ENCODE measurements at regions of chr20 and their contacts with region 1.

Region 1: DNA sequence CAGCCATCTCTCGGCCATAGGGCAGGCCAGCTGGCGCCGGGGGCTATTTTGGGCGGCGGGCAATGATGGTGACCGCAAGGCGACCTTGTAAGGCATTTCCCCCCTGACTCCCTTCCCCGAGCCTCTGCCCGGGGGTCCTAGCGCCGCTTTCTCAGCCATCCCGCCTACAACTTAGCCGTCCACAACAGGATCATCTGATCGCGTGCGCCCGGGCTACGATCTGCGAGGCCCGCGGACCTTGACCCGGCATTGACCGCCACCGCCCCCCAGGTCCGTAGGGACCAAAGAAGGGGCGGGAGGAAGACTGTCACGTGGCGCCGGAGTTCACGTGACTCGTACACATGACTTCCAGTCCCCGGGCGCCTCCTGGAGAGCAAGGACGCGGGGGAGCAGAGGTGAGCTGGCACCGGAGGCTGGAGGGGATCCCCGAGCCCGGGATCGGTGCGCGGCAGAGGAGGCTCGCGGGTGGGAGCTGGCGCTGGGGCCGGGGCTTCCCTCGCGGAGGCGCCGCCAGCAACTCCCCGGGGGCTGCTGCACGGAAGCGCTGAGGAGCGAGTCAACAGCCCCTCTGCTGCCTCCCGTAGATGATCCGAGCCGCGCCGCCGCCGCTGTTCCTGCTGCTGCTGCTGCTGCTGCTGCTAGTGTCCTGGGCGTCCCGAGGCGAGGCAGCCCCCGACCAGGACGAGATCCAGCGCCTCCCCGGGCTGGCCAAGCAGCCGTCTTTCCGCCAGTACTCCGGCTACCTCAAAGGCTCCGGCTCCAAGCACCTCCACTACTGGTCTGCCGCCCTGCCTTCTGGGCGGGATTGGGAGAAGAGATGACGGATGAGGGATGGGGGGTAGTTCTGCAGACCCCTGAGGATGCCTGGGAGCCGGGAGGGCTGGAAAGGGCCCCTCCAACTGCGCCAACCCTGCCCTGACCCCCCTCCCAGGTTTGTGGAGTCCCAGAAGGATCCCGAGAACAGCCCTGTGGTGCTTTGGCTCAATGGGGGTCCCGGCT is at the starts of genes CTSA and NEURL2:
- DNase-seq: peak; percentile 91
- ATAC-seq: peak; percentile 83
- H3K4me3 ChIP-seq: peak within 1 kb of the TSS; percentile 22 to 95 (median 78)
- H3K4me3 Mint-ChIP-seq: peak within 1 kb of the TSS; percentile 97
- H3K27ac ChIP-seq: peak within 1 kb of the TSS; percentile 51 to 80
- H3K27ac Mint-ChIP-seq: peak within 1 kb of the TSS; percentile 96
- H3K4me1 ChIP-seq: peaks cover 24 to 29% of the 10 kb centered on the region in 2 donors
- H3K4me1 Mint-ChIP-seq: peaks cover 31% of the 10 kb centered on the region
- H3K27me3 ChIP-seq: no peaks in the 10 kb centered on the region
- H3K27me3 Mint-ChIP-seq: no peaks in the 10 kb centered on the region
- CTCF ChIP-seq: no peak
- total RNA-seq, gene CTSA: 100 and 113 TPM in 2 replicates
- total RNA-seq, gene NEURL2: 4.1 and 5.4 TPM in 2 replicates

Region 2: GRCh38 chr20:45798935-45799642 is 92.2 kb before region 1 on chr20:
- CTCF ChIA-PET with region 1: interaction called, 11 read pairs
- POLR2A ChIA-PET with region 1: interaction called, 7 read pairs
- intact Hi-C with region 1: loop called (anchors 2 kb)
- DNase-seq: peak; percentile 72
- ATAC-seq: peak; percentile 83
- H3K4me3 ChIP-seq: no peak overlapping the region
- H3K4me3 Mint-ChIP-seq: no peak overlapping the region
- H3K27ac ChIP-seq: peak overlapping the region; percentile 8 to 16
- H3K27ac Mint-ChIP-seq: peak overlapping the region; percentile 0
- H3K4me1 ChIP-seq: peaks cover 3 to 10% of the 10 kb centered on the region in 2 donors
- H3K4me1 Mint-ChIP-seq: peaks cover 8% of the 10 kb centered on the region
- H3K27me3 ChIP-seq: no peaks in the 10 kb centered on the region
- H3K27me3 Mint-ChIP-seq: no peaks in the 10 kb centered on the region
- CTCF ChIP-seq: peak; percentile 83

Region 3: DNA sequence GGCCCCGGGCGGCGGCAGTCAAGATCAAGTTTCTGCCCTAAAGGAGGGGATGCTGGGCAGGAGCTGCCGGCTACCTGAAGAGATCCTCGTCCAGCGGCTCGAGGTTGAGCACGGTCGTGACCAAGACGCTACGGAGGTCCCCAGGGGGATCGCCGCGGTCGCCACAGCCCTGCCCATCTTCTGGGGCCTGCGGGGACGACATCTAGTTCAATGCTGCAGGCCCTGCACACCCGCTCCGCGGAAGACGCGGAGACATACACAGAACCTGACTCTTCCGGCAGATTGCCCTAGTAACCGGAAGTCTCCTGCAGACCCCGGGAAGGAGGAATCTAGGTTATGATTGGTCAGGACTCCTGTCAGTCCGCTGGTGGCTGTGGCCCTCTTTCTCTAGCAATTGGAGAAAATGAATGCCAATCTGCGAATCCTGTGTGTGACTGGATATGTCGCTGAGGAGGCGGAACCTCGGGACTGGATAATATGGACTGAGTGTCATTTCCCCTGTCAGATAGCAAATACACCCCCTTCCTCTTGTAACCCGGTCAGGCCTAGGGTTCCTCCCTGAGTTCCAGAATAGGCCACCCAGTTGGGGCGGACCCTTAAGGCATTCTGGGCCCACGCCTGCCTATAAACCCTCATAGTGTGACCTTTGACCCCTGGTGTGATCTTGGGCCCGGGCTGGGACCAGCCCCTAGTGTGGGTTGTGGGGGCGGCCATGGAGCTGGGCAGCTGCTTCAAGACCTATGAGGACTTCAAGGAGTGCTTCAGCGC is 34.0 kb before region 1 on chr20 and contains the starts of genes ACOT8 and ZSWIM3:
- CTCF ChIA-PET with region 1: interaction called, 8 read pairs
- POLR2A ChIA-PET with region 1: interaction called, 5 read pairs
- intact Hi-C with region 1: loop called (anchors 1 kb)
- DNase-seq: peak; percentile 99
- ATAC-seq: peak; percentile 98
- H3K4me3 ChIP-seq: peak within 1 kb of the TSS; percentile 69 to 94 (median 81)
- H3K4me3 Mint-ChIP-seq: peak within 1 kb of the TSS; percentile 93
- H3K27ac ChIP-seq: peak within 1 kb of the TSS; percentile 88
- H3K27ac Mint-ChIP-seq: peak within 1 kb of the TSS; percentile 96
- H3K4me1 ChIP-seq: peaks cover 18 to 29% of the 10 kb centered on the region in 2 donors
- H3K4me1 Mint-ChIP-seq: peaks cover 38% of the 10 kb centered on the region
- H3K27me3 ChIP-seq: no peaks in the 10 kb centered on the region
- H3K27me3 Mint-ChIP-seq: no peaks in the 10 kb centered on the region
- CTCF ChIP-seq: no peak
- total RNA-seq, gene ACOT8: 27.1 and 32.4 TPM in 2 replicates
- total RNA-seq, gene ZSWIM3: 7.1 and 7.8 TPM in 2 replicates

Region 4: DNA sequence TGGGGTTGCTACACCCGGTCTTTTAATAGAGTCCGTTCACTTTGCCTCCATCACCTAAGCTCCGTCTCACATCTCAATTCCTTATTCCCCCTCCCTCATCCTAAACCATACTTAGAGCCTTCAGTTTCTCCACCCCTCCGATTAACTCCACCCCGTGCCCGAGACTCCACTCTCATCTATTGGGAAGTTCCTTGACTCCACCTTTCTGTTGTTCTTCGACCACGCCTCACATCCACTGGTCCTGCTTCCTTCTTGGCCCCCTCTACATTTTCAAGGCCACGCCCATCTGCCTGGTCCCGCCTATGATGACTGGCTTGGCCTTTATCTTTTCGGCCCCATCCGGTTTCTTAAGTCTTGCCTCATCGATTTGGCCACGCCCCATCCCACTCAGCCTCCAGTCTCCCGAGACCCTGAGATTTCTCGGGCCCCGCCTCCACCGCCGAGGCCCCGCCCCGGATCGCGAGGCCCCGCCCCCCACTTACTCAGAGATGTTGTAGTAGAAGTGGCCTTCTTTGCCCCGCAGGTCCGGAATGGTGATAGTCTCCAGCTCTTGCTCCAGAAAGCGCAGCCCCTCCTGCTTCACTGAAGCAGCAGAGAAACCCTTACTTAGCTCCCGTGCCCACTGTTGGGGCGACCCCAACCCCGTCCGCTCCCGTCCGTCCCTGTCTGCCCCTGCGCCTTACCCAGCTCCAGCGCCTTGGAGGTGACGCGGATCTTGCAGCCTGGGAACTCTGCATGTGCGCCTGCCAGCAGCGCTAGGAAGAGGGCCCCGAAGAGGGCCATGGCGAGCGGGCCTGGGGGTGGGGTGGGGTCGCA is 19.6 kb after region 1 on chr20:
- CTCF ChIA-PET with region 1: interaction called, 8 read pairs
- POLR2A ChIA-PET with region 1: interaction called, 6 read pairs
- intact Hi-C with region 1: loop called (anchors 1 kb)
- DNase-seq: peak; percentile 95
- ATAC-seq: peak; percentile 93
- H3K4me3 ChIP-seq: peak overlapping the region in 4 of 5 experiments; percentile 37 to 65 (median 60)
- H3K4me3 Mint-ChIP-seq: peak overlapping the region; percentile 94
- H3K27ac ChIP-seq: no peak overlapping the region
- H3K27ac Mint-ChIP-seq: peak overlapping the region; percentile 28
- H3K4me1 ChIP-seq: peaks cover 14 to 22% of the 10 kb centered on the region in 2 donors
- H3K4me1 Mint-ChIP-seq: peaks cover 20% of the 10 kb centered on the region
- H3K27me3 ChIP-seq: peaks cover 0 to 19% (median 9%) of the 10 kb centered on the region in 4 experiments
- H3K27me3 Mint-ChIP-seq: peaks cover 7% of the 10 kb centered on the region
- CTCF ChIP-seq: no peak

Region 5: GRCh38 chr20:45963059-45964005 is 72.0 kb after region 1 on chr20:
- CTCF ChIA-PET with region 1: interaction called, 3 read pairs
- POLR2A ChIA-PET with region 1: interaction called, 4 read pairs
- intact Hi-C with region 1: loop called (anchors 2 kb)
- DNase-seq: peak; percentile 56
- ATAC-seq: peak; percentile 11
- H3K4me3 ChIP-seq: no peak overlapping the region
- H3K4me3 Mint-ChIP-seq: no peak overlapping the region
- H3K27ac ChIP-seq: no peak overlapping the region
- H3K27ac Mint-ChIP-seq: peak overlapping the region; percentile 64
- H3K4me1 ChIP-seq: peaks cover 0 to 9% of the 10 kb centered on the region in 2 donors
- H3K4me1 Mint-ChIP-seq: peaks cover 10% of the 10 kb centered on the region
- H3K27me3 ChIP-seq: no peaks in the 10 kb centered on the region
- H3K27me3 Mint-ChIP-seq: no peaks in the 10 kb centered on the region
- CTCF ChIP-seq: no peak

Region 6: GRCh38 chr20:45985516-45985941 is 94.2 kb after region 1 on chr20:
- CTCF ChIA-PET with region 1: no interaction called
- POLR2A ChIA-PET with region 1: no interaction called
- intact Hi-C with region 1: no loop called
- DNase-seq: no peak
- ATAC-seq: no peak
- H3K4me3 ChIP-seq: no peak overlapping the region
- H3K4me3 Mint-ChIP-seq: no peak overlapping the region
- H3K27ac ChIP-seq: no peak overlapping the region
- H3K27ac Mint-ChIP-seq: no peak overlapping the region
- H3K4me1 ChIP-seq: peaks cover 0 to 5% of the 10 kb centered on the region in 2 donors
- H3K4me1 Mint-ChIP-seq: no peaks in the 10 kb centered on the region
- H3K27me3 ChIP-seq: peaks cover 0 to 30% (median 11%) of the 10 kb centered on the region in 4 experiments
- H3K27me3 Mint-ChIP-seq: peaks cover 20% of the 10 kb centered on the region
- CTCF ChIP-seq: no peak